Ascending aorta (tissue), 2 donors: ENCODE measurements at regions of chr5 and their contacts with region 1.

Region 1: DNA sequence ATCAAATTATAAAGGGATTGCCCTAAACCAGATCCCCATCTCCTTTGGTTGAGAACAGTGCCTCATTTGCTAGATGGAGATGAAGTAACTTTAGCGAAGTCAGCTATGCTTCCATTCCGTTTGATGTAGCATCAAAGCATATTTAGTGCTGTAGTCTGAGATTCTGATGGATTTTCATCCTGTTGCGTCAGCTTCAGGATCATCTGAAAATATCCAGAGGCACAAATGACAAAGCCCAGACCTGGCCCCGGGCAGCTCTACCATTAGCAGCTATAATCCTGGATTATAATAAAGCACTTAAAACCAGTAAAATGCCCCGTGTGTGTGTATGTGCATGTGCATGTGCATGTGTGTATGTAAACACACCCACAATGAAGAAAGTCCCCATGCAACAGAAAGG is 44.7 kb downstream of the ERAP1 start:
- DNase-seq: no peak
- H3K4me3 ChIP-seq: no peak overlapping the region
- H3K27ac ChIP-seq: no peak overlapping the region
- H3K4me1 ChIP-seq: no peaks in the 10 kb centered on the region
- H3K27me3 ChIP-seq: no peaks in the 10 kb centered on the region
- CTCF ChIP-seq: no peak

Region 2: DNA sequence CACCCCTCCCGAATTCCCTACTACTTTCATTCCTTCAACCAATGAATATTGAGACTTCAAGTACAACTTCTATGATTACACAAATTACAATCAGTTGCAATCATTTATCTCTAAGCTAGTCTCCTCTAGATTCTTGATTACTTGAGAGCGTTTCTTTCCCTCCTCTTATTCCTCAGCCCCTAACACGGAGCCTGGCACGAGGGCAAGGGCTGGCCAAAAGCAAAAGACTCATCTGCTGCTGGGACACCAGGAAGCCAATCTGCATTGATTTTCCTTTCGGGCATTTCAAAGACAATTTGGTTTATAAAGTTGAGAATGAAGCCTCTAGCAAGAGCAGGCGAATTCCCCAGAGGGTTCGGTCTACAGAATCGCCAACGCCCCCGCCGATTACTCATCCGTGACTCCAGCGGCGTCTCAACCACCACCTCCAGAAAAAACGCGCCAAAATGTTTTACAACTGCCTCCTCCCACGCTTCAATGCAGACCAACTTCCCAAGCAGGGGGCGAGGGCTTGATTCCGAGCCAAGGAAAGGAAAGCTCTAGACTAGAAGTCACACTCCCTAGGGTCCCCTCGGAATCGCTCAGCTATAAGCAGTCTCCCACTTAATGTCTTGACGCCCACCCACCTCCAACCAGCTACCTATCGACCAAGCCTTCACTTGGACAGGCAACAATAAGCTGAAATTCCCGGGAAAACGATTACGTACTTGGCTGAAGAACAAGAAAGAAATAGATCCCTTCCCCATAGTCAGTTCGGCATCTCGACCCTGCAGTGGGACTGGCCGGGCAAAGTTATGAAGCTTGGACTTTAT is 331.4 kb before region 1 on chr5:
- intact Hi-C with region 1: no loop called
- DNase-seq: no peak
- H3K4me3 ChIP-seq: peak overlapping the region; percentile 18 to 27
- H3K27ac ChIP-seq: no peak overlapping the region
- H3K4me1 ChIP-seq: peaks cover 0 to 7% of the 10 kb centered on the region in 2 donors
- H3K27me3 ChIP-seq: no peaks in the 10 kb centered on the region
- CTCF ChIP-seq: no peak

Region 3: DNA sequence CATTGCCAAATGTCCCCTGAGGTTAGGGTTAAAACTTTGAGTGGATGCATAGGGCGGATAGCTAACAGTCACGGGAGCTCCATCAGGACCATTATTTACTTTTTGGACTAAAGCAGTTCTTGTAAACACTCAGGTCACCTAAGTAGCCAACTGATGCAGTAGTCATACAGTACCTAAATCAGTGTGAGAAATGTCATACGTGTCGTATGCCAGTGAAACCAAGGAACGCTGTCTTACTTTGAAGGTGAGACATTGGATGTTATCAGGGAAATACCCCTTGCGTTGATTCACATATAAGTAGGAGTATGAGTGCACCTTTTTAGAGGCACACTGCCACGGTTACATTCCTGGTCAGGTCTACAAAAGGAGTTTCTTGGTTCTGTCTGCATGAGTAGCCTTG is 274.8 kb after region 1 on chr5:
- intact Hi-C with region 1: loop called (anchors 10 kb)
- DNase-seq: no peak
- H3K4me3 ChIP-seq: no peak overlapping the region
- H3K27ac ChIP-seq: no peak overlapping the region
- H3K4me1 ChIP-seq: no peaks in the 10 kb centered on the region
- H3K27me3 ChIP-seq: no peaks in the 10 kb centered on the region
- CTCF ChIP-seq: no peak